Activated CD8-positive, alpha-beta T cell treated with anti-CD3 and anti-CD28 coated beads for 36 hours (primary cell): ENCODE measurements at regions of chr17 and their contacts with region 1.

Region 1: GRCh38 chr17:19362277-19363113 is at the start of gene B9D1:
- DNase-seq: peak; percentile 92
- ATAC-seq: peak; percentile 92
- H3K4me3 Mint-ChIP-seq: peak within 1 kb of the TSS; percentile 81
- H3K27ac Mint-ChIP-seq: peak within 1 kb of the TSS; percentile 81
- H3K4me1 Mint-ChIP-seq: peaks cover 5% of the 10 kb centered on the region
- H3K27me3 Mint-ChIP-seq: peaks cover 4% of the 10 kb centered on the region
- CTCF ChIP-seq: peak; percentile 98
- total RNA-seq, gene B9D1: 7.2 to 9.4 TPM

Region 2: DNA sequence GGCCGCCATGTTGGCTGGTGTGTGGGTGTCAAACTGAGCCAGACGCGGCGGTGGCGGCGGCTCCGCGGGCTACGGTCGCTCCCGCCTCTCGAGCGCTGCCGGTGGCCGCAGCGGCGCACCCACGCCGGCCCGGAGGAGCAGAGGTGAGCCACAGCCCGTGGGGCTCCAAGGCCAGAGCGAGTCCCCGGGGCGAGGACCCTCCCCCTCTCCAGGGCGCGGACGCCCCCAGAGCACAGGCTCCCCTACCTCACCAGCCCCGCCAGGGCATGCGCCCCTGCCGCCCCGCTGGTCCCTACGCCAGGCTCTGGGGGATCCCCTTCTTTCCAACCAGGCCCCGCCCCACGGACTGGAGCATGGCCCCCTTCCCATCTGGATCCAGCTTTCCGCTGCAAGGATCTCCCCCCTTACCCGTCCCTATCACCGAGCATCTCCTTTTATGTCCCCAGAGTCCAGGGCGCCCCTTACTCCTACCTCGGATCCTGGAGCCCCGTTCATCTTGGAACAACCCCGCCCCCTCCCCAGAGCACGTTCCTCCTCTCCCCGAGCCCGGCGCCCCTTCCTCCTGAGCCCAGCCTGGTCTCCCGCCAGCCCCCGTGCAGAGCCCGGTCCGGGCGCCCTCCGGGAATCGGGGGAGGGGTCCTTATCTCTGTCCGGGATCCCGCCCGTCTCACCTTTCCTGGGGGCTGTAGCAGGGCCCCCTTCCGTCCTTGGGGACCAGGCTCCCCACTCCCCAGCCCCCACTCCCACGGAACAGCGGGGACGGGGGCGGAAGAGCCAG is 124.9 kb before region 1 on chr17:
- CTCF ChIA-PET with region 1: no interaction called
- POLR2A ChIA-PET with region 1: no interaction called
- intact Hi-C with region 1: no loop called
- DNase-seq: peak; percentile 41
- ATAC-seq: peak; percentile 17
- H3K4me3 Mint-ChIP-seq: peak overlapping the region; percentile 83
- H3K27ac Mint-ChIP-seq: peak overlapping the region; percentile 49
- H3K4me1 Mint-ChIP-seq: peaks cover 4% of the 10 kb centered on the region
- H3K27me3 Mint-ChIP-seq: peaks cover 5% of the 10 kb centered on the region
- CTCF ChIP-seq: no peak

Region 3: DNA sequence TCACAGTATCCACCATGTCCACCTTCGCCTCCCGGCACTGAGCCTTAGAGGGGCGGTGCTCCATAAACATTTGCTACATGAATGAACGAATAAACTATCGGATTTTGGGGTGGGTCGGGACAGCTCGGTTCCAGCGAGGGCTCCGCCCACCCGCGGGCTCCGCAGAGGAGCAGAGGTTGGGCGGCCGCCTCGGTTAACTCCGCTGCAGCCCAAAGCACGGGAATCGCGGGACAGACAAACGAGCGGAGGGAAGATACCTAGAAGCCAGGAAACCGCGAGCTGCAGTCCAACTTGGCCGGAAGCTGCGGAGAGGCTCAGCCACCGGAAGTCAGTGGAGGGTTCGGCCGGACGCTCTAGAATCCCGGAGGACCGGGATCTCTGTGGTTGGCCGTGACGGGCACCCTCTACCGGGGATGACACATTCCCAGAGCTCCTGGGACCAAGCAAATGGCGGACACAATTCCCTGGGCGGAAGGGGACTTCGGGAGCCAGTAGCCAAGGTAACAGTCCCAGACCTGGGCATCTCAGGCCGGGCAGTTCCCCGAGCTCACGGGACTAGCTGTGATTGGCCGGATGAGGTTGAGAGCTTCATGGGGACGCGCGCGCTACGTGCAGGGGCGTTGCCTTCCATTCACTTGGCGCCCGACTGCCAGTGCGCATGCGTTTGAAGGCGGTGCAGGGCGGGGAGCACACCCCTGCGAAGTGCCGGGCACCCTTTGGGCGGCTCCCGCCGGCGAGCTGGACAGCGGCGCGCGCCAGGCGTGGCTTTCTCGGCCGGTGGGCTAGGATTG is 15.3 kb after region 1 on chr17:
- CTCF ChIA-PET with region 1: interaction called, 51 read pairs
- POLR2A ChIA-PET with region 1: interaction called, 6 read pairs
- intact Hi-C with region 1: no loop called
- DNase-seq: peak; percentile 96
- ATAC-seq: peak; percentile 92
- H3K4me3 Mint-ChIP-seq: peak overlapping the region; percentile 98
- H3K27ac Mint-ChIP-seq: peak overlapping the region; percentile 95
- H3K4me1 Mint-ChIP-seq: peaks cover 17% of the 10 kb centered on the region
- H3K27me3 Mint-ChIP-seq: no peaks in the 10 kb centered on the region
- CTCF ChIP-seq: no peak

Region 4: GRCh38 chr17:19424934-19425868 is 62.7 kb after region 1 on chr17:
- CTCF ChIA-PET with region 1: interaction called, 12 read pairs
- POLR2A ChIA-PET with region 1: no interaction called
- intact Hi-C with region 1: no loop called
- DNase-seq: no peak
- ATAC-seq: no peak
- H3K4me3 Mint-ChIP-seq: no peak overlapping the region
- H3K27ac Mint-ChIP-seq: no peak overlapping the region
- H3K4me1 Mint-ChIP-seq: no peaks in the 10 kb centered on the region
- H3K27me3 Mint-ChIP-seq: peaks cover 5% of the 10 kb centered on the region
- CTCF ChIP-seq: no peak

Region 5: DNA sequence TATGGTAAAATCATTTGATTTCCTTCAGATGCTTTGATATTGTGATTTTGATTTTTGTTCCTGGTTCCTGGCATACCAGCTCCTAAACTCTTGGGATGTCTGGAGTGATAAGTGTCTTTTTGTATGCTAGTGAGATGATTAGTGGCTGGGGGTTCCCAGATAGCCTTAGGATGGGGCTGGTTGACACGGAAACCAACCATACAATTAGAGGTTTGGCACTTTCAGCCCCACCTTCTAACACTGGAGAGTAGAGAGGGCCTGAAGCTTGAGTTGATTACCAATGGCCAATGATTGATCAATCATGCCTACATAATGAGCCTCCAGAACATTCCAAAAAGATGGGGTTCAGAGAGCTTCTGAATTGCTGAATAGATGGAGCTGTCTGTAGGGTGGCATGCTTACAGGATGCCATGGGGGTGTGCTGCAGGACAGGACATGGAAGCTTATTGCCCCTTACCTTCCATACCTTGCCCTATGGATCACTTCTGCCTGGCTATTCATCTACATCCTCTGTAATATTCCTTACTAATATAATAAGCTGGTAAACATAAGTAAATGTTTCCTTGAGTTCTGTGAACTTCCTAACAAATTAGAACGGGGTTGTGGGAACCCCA is 71.3 kb after region 1 on chr17:
- CTCF ChIA-PET with region 1: interaction called, 12 read pairs
- POLR2A ChIA-PET with region 1: interaction called, 3 read pairs
- intact Hi-C with region 1: no loop called
- DNase-seq: no peak
- ATAC-seq: no peak
- H3K4me3 Mint-ChIP-seq: no peak overlapping the region
- H3K27ac Mint-ChIP-seq: no peak overlapping the region
- H3K4me1 Mint-ChIP-seq: no peaks in the 10 kb centered on the region
- H3K27me3 Mint-ChIP-seq: peaks cover 4% of the 10 kb centered on the region
- CTCF ChIP-seq: no peak

Region 6: GRCh38 chr17:19447085-19447583 is 84.6 kb after region 1 on chr17:
- CTCF ChIA-PET with region 1: interaction called, 133 read pairs
- POLR2A ChIA-PET with region 1: interaction called, 4 read pairs
- intact Hi-C with region 1: loop called (anchors 2 kb)
- DNase-seq: peak; percentile 76
- ATAC-seq: peak; percentile 67
- H3K4me3 Mint-ChIP-seq: no peak overlapping the region
- H3K27ac Mint-ChIP-seq: no peak overlapping the region
- H3K4me1 Mint-ChIP-seq: no peaks in the 10 kb centered on the region
- H3K27me3 Mint-ChIP-seq: peaks cover 4% of the 10 kb centered on the region
- CTCF ChIP-seq: peak; percentile 96

Region 7: GRCh38 chr17:19460700-19461099 is 98.2 kb after region 1 on chr17:
- CTCF ChIA-PET with region 1: interaction called, 31 read pairs
- POLR2A ChIA-PET with region 1: no interaction called
- intact Hi-C with region 1: no loop called
- DNase-seq: no peak
- ATAC-seq: no peak
- H3K4me3 Mint-ChIP-seq: no peak overlapping the region
- H3K27ac Mint-ChIP-seq: no peak overlapping the region
- H3K4me1 Mint-ChIP-seq: peaks cover 33% of the 10 kb centered on the region
- H3K27me3 Mint-ChIP-seq: no peaks in the 10 kb centered on the region
- CTCF ChIP-seq: no peak

Region 8: GRCh38 chr17:19648475-19649406 is 286.2 kb after region 1 on chr17 and contains the start of gene ALDH3A2:
- CTCF ChIA-PET with region 1: interaction called, 11 read pairs
- POLR2A ChIA-PET with region 1: interaction called, 4 read pairs
- intact Hi-C with region 1: no loop called
- DNase-seq: peak; percentile 98
- ATAC-seq: peak; percentile 94
- H3K4me3 Mint-ChIP-seq: peak within 1 kb of the TSS; percentile 88
- H3K27ac Mint-ChIP-seq: peak within 1 kb of the TSS; percentile 89
- H3K4me1 Mint-ChIP-seq: peaks cover 40% of the 10 kb centered on the region
- H3K27me3 Mint-ChIP-seq: no peaks in the 10 kb centered on the region
- CTCF ChIP-seq: no peak
- total RNA-seq, gene ALDH3A2: 17.6 to 20.3 TPM